Activated CD4-positive, alpha-beta memory T cell treated with anti-CD3 and anti-CD28 coated beads for 36 hours (primary cell): ENCODE measurements at regions of chr14 and their contacts with region 1.

Region 1: DNA sequence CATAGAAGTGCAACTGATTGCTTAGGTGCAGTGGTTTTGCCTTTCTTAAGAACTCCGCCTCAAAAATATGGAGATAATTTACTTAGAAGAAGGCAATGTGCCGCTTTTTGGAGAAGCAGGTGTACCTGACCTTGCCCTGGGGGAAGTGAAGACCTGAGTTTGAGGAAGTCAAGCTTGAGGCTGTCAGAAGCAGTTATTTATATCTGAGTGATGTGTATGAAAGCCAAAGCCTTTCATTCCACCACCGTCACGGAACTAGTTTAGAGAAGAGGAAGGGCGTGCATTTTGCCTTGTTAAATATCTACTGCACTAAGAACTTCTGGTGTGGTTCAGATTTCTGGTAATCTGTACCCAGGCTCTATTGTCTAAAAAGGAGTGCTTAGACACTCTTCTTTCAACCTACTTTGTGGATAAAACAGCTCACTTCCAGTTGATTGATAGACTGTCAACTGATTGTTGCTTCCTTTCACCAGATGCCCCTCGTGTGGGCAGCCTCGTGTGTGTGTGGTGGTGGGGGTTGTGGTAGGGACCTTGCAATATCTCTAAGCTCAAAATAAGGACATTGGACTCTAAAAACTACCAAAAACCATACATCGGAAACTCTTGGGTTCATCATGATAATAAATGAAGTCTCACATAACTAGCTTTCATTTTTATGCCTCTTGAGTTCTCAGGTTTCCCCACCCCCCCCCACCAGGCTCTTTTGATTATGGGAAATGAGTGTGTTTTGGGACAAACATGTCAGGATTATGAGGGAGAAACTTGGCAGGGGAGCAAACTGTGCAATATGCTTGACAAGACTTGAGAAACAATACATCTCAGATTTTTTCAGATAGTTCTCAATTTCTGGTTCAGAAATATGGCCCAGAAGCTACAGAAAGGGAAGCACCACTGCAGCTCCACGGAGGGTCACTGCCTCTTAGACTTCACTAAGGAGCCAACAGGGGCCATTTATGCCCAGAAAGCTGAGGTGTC is 78.6 kb downstream of the ARF6 start:
- DNase-seq: peak; percentile 78
- H3K4me3 Mint-ChIP-seq: peak overlapping the region; percentile 62
- H3K27ac Mint-ChIP-seq: peak overlapping the region; percentile 95
- H3K4me1 Mint-ChIP-seq: peaks cover 61% of the 10 kb centered on the region
- H3K27me3 Mint-ChIP-seq: no peaks in the 10 kb centered on the region

Region 2: GRCh38 chr14:49879683-49880204 is 91.7 kb before region 1 on chr14:
- CTCF ChIA-PET with region 1: interaction called, 11 read pairs
- POLR2A ChIA-PET with region 1: interaction called, 5 read pairs
- intact Hi-C with region 1: no loop called
- DNase-seq: peak; percentile 87
- H3K4me3 Mint-ChIP-seq: peak overlapping the region; percentile 12
- H3K27ac Mint-ChIP-seq: peak overlapping the region; percentile 62
- H3K4me1 Mint-ChIP-seq: peaks cover 35% of the 10 kb centered on the region
- H3K27me3 Mint-ChIP-seq: no peaks in the 10 kb centered on the region

Region 3: DNA sequence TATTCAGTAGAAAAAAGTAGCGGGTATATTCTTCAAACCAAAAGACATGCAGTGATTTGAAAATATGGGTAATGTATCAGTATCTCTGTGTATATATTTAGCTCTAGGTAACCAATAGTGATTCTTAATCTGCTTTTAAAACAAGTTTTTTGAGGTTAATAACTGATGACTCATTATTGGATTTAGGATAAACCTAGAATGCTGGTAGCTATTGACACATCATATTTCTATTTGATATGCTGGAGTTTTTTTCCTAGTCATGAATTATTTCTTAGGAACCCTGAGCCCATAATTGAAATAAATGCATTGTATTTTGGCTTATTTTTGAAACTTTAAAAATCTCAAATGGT is 63.0 kb before region 1 on chr14:
- CTCF ChIA-PET with region 1: interaction called, 4 read pairs
- POLR2A ChIA-PET with region 1: interaction called, 5 read pairs
- intact Hi-C with region 1: loop called (anchors 1 kb)
- DNase-seq: no peak
- H3K4me3 Mint-ChIP-seq: peak overlapping the region; percentile 5
- H3K27ac Mint-ChIP-seq: no peak overlapping the region
- H3K4me1 Mint-ChIP-seq: peaks cover 36% of the 10 kb centered on the region
- H3K27me3 Mint-ChIP-seq: no peaks in the 10 kb centered on the region

Region 4: DNA sequence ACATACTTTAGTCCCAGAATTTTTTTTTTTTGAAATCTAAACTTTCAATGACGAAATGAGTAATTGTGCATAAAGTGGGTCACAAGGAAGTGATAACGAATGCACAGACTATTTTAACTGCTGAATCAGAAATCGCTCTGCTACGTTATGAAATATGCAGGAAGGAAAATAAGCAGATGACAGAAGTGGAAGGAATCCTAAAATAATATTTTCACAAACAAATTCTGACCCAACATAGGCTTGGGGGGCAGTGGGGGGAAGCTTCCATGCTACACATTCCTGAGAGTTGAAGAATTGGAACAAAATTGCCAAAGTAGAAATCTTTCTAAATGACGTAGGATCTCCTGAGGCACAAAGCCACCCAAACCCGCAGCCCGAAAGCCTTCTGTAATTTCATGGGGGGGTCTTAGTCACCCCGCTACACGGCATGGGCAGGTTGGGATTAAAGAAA is 11.1 kb after region 1 on chr14:
- CTCF ChIA-PET with region 1: no interaction called
- POLR2A ChIA-PET with region 1: interaction called, 60 read pairs
- intact Hi-C with region 1: loop called (anchors 1 kb)
- DNase-seq: peak; percentile 44
- H3K4me3 Mint-ChIP-seq: peak overlapping the region; percentile 54
- H3K27ac Mint-ChIP-seq: peak overlapping the region; percentile 82
- H3K4me1 Mint-ChIP-seq: peaks cover 81% of the 10 kb centered on the region
- H3K27me3 Mint-ChIP-seq: no peaks in the 10 kb centered on the region

Region 5: DNA sequence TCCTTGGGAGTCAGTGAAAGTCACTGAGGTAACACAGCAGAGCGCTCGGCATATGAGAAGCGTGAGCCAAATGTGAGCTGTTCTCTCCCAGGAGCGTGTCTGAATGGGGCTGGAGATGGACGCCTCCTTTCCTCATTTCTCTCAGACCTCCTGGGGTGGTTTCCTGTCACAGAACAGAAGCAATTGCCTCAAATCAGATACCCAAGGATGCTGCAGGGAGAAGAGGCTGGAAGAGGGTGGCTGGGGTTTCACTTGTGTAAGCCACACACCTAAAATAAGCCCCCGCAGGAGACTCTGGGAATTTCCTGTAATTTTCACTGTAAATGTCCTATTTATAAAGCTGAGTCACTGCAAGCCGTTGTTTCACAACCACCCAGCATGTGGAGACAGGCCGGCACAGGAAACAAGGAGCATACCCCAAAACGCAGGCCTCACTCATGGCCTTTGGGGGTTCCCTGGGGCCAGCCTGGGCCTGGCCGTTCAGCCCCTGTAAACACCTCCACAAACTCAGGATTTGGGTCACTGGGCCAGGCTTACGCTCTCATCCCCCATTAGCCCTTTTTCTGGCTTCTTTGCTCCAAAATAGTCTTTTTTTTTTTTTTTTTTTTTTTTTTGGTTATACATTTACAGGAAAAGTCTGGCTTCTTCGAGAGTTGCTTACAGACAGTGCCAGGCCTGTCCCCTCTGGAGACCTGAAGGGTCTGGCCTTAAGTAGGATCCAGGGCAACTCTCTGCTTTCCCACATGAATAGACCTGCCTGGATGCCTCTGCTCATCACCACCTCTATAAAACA is 89.6 kb after region 1 on chr14:
- CTCF ChIA-PET with region 1: interaction called, 8 read pairs
- POLR2A ChIA-PET with region 1: interaction called, 14 read pairs
- intact Hi-C with region 1: no loop called
- DNase-seq: peak; percentile 71
- H3K4me3 Mint-ChIP-seq: peak overlapping the region; percentile 96
- H3K27ac Mint-ChIP-seq: peak overlapping the region; percentile 99
- H3K4me1 Mint-ChIP-seq: peaks cover 73% of the 10 kb centered on the region
- H3K27me3 Mint-ChIP-seq: no peaks in the 10 kb centered on the region